ENCODE measurements at regions of chr12 and their contacts with region 1.

Region 1: DNA sequence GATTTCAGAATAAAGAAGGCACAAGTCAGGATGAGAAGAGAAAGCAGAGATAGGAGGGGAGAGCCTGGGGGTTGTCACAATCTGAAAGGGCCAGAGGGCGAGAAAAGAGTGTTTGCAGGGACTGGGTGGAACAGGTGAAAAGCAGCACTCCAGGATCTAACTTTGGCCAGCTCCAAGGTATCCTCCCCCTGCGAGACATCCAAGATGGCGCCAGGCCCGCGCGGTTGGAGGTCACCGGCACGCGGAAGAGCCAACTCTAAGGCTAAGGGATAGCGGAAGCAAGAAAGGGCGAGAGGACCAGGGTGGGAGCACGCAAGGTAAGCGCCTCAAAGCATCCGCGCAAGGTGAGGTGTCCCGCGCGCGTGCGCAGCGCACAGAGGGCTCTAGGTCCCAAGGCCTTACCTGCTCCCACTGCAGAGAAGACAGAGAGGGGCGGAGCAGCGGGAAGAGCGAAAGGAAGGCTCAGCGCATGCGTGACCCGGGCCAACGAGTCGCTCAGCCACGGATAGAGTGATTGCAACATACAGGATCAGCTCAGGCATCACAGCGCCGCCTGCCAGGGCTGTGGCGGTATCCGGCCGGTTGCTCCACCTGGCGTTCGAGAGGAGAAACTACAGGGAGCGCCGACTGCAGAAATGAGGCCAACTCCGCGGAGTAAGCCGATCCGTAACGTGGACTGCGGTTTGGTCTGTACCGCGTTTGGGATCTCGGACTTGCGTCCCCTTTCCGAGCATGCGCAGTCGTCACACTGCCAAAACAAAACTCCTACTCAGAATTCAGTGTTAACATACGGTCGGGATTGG is at the start of gene ATP5MC2:
- DNase-seq: peak; percentile 98
- ATAC-seq: peak; percentile 95
- H3K4me3 Mint-ChIP-seq: peak within 1 kb of the TSS; percentile 88
- H3K27ac Mint-ChIP-seq: peak within 1 kb of the TSS; percentile 98
- H3K4me1 Mint-ChIP-seq: peaks cover 43% of the 10 kb centered on the region
- H3K27me3 Mint-ChIP-seq: peaks cover 27% of the 10 kb centered on the region
- total RNA-seq, gene ATP5MC2: 241 to 247 TPM

Region 2: GRCh38 chr12:53543539-53543938 is 132.3 kb before region 1 on chr12:
- CTCF ChIA-PET with region 1: interaction called, 122 read pairs
- POLR2A ChIA-PET with region 1: interaction called, 18 read pairs
- DNase-seq: peak; percentile 65
- ATAC-seq: peak; percentile 92
- H3K4me3 Mint-ChIP-seq: no peak overlapping the region
- H3K27ac Mint-ChIP-seq: peak overlapping the region; percentile 59
- H3K4me1 Mint-ChIP-seq: peaks cover 10% of the 10 kb centered on the region
- H3K27me3 Mint-ChIP-seq: no peaks in the 10 kb centered on the region

Region 3: GRCh38 chr12:53591301-53592206 is 84.3 kb before region 1 on chr12:
- CTCF ChIA-PET with region 1: interaction called, 13 read pairs
- POLR2A ChIA-PET with region 1: no interaction called
- DNase-seq: no peak
- ATAC-seq: no peak
- H3K4me3 Mint-ChIP-seq: no peak overlapping the region
- H3K27ac Mint-ChIP-seq: no peak overlapping the region
- H3K4me1 Mint-ChIP-seq: peaks cover 4% of the 10 kb centered on the region
- H3K27me3 Mint-ChIP-seq: no peaks in the 10 kb centered on the region

Region 4: GRCh38 chr12:53625946-53626701 is 49.7 kb before region 1 on chr12 and contains the start of gene ATF7:
- CTCF ChIA-PET with region 1: interaction called, 36 read pairs
- POLR2A ChIA-PET with region 1: interaction called, 4 read pairs
- DNase-seq: peak; percentile 98
- ATAC-seq: peak; percentile 98
- H3K4me3 Mint-ChIP-seq: peak within 1 kb of the TSS; percentile 98
- H3K27ac Mint-ChIP-seq: peak within 1 kb of the TSS; percentile 96
- H3K4me1 Mint-ChIP-seq: peaks cover 32% of the 10 kb centered on the region
- H3K27me3 Mint-ChIP-seq: no peaks in the 10 kb centered on the region
- total RNA-seq, gene ATF7: 27.7 to 28.7 TPM

Region 5: GRCh38 chr12:53746592-53747092 is 70.8 kb after region 1 on chr12:
- CTCF ChIA-PET with region 1: interaction called, 23 read pairs
- POLR2A ChIA-PET with region 1: no interaction called
- DNase-seq: peak; percentile 92
- ATAC-seq: peak; percentile 78
- H3K4me3 Mint-ChIP-seq: no peak overlapping the region
- H3K27ac Mint-ChIP-seq: no peak overlapping the region
- H3K4me1 Mint-ChIP-seq: peaks cover 3% of the 10 kb centered on the region
- H3K27me3 Mint-ChIP-seq: peaks cover 30% of the 10 kb centered on the region

Region 6: DNA sequence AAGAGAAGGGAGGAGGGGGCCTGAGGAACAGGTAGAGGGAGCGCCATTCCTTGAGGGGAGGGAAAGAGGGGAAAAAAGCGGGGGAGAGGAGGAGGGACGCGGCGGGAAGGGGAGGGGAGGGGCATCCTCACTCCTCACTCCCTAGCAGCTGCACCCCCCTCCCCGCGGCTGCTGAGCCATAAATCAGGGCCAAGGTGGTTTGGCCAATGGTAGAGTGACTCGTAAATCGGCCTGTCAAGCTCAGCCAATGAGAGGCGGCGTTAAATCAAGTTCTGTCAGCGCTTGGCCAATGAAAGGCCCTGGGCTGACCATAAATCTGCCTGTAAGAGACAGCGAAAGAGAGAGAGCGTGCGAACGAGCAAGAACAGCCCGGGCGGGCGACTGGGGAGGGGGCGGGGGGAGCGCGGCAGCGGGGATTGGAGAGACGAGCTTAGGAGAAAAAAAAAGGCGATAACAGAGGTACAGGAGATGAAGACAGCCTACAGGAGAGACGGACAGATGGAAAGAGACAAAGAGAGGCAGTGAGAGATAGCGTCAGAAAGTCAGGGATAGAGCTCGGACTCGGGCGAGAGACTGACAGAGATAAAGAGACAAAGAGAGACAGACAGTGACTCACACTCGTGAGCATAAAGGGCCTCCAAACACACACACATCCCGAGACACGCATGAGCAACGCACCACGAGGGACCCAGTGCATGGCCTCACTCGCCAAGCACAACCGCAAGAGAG is 683.3 kb after region 1 on chr12:
- CTCF ChIA-PET with region 1: no interaction called
- POLR2A ChIA-PET with region 1: no interaction called
- DNase-seq: peak; percentile 98
- ATAC-seq: peak; percentile 96
- H3K4me3 Mint-ChIP-seq: no peak overlapping the region
- H3K27ac Mint-ChIP-seq: no peak overlapping the region
- H3K4me1 Mint-ChIP-seq: peaks cover 30% of the 10 kb centered on the region
- H3K27me3 Mint-ChIP-seq: no peaks in the 10 kb centered on the region